Activated CD4-positive, alpha-beta T cell treated with anti-CD3 and anti-CD28 coated beads, Interleukin-2, amount 10 ng/mL, durations not matched to agents 24 days and 14 days (primary cell): ENCODE measurements at regions of chr5 and their contacts with region 1.

Region 1: GRCh38 chr5:149381987-149382340 is 2.9 kb upstream of the IL17B start:
- DNase-seq: peak; percentile 92
- H3K4me3 Mint-ChIP-seq: no peak overlapping the region
- H3K27ac Mint-ChIP-seq: no peak overlapping the region
- H3K4me1 Mint-ChIP-seq: no peaks in the 10 kb centered on the region
- H3K27me3 Mint-ChIP-seq: no peaks in the 10 kb centered on the region

Region 2: DNA sequence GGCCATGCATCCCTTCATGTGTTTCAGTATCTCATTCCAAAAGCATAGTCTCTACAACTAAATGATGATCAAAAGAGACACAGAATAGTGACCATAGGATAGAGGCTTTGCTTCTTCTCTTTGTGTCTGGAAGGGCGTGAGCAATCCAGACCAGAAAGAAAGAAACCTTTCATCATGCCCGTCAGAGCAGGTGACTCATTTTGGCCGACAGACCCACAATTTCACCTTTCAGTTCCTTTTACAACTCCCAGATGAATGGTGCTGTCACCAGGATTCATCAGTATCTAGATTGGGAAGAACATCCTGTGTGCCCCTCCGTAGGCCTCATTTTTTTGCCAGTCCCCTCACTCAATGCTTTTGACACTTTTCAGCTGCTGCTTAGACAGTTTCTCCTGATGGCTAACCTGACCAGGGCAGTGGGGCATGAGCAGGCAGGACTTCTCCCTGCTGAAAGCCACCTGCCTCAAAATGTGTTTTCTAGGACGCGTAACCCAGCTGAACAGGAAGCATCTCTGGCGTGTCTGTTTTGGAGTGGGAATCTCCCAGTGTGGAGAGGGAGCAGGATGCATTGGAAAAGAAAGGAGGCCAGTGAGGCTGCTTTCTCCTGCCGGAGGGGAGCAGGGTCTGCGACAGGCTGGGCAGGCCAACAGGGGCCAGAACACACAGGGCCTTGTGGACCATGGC is 219.4 kb before region 1 on chr5:
- intact Hi-C with region 1: no loop called
- DNase-seq: no peak
- H3K4me3 Mint-ChIP-seq: no peak overlapping the region
- H3K27ac Mint-ChIP-seq: no peak overlapping the region
- H3K4me1 Mint-ChIP-seq: no peaks in the 10 kb centered on the region
- H3K27me3 Mint-ChIP-seq: peaks cover 11% of the 10 kb centered on the region

Region 3: DNA sequence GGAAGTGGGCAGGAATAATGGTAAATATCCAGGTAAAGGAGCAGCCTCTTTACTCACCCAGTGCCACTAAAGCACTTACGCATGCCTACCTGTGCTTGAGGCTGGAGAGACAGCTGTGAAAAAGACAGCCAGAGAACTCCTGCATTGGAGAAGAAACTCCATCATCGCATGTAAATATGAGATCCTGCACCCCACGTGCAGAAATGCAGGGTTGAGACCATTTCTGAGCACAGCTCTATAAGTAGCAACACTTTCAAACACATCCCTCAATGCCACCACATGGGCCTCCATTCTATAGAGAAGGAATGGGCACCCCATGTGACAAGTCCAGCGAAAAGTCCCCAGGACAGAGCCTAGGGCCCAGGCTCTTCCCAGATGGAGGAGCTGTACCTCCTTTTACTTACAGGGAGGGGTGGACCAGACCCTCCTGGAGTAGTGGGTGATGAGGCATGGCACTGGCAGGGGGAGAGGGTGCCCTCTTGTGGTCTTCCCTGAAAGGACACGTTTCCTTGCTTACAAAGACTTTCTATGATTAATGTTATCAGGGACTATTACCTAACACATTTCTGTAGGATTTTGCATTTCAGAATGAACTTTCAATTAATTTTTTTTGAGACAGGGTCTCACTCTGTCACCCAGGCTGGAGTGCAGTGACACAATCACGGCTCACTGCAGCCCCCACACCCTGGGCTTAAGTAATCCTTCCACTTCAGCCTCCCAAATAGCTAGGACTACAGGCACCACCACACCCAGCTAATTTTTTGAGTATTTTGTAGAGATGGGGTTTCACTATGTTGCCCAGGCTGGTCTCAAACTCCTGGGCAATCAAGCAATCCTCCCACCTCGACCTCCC is 52.4 kb after region 1 on chr5:
- intact Hi-C with region 1: loop called (anchors 1 kb)
- DNase-seq: peak; percentile 85
- H3K4me3 Mint-ChIP-seq: no peak overlapping the region
- H3K27ac Mint-ChIP-seq: no peak overlapping the region
- H3K4me1 Mint-ChIP-seq: peaks cover 17% of the 10 kb centered on the region
- H3K27me3 Mint-ChIP-seq: peaks cover 4% of the 10 kb centered on the region

Region 4: DNA sequence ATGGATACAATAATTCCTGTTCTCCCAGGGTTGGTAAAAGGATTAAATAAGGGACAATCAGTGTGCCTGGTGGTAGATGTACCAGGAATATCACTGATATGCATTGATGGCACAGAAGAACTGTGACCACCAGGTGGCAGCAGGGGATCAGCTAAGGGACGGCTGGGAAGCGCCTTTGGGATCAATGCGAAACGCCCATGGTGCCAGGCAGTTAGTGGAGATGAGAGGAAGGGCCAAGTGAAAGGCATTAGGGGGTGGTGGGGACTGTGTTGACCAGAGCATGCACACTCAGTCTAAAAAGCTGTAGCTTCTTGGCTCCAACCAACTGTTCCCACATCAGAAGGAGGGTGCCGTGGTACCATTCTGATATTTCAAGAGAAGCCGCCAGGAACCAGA is 254.9 kb after region 1 on chr5:
- intact Hi-C with region 1: no loop called
- DNase-seq: peak; percentile 61
- H3K4me3 Mint-ChIP-seq: no peak overlapping the region
- H3K27ac Mint-ChIP-seq: no peak overlapping the region
- H3K4me1 Mint-ChIP-seq: peaks cover 10% of the 10 kb centered on the region
- H3K27me3 Mint-ChIP-seq: no peaks in the 10 kb centered on the region

Region 5: GRCh38 chr5:149913436-149914419 is 531.8 kb after region 1 on chr5:
- intact Hi-C with region 1: no loop called
- DNase-seq: no peak
- H3K4me3 Mint-ChIP-seq: no peak overlapping the region
- H3K27ac Mint-ChIP-seq: no peak overlapping the region
- H3K4me1 Mint-ChIP-seq: no peaks in the 10 kb centered on the region
- H3K27me3 Mint-ChIP-seq: peaks cover 17% of the 10 kb centered on the region